GM10248 (cell line): ENCODE measurements at regions of chr3 and their contacts with region 1.

Region 1: GRCh38 chr3:154310840-154311239 is 13.4 kb downstream of the DHX36 start:
- DNase-seq: no peak
- CTCF ChIP-seq: no peak

Region 2: GRCh38 chr3:153855772-153856171 is 455.1 kb before region 1 on chr3:
- CTCF ChIA-PET with region 1: no interaction called
- POLR2A ChIA-PET with region 1: no interaction called
- DNase-seq: no peak
- CTCF ChIP-seq: peak; percentile 6

Region 3: GRCh38 chr3:153928851-153929250 is 382.0 kb before region 1 on chr3:
- CTCF ChIA-PET with region 1: no interaction called
- POLR2A ChIA-PET with region 1: no interaction called
- DNase-seq: no peak
- CTCF ChIP-seq: no peak

Region 4: GRCh38 chr3:154323891-154324738 is 13.3 kb after region 1 on chr3 and contains the start of gene DHX36:
- CTCF ChIA-PET with region 1: interaction called, 12 read pairs
- POLR2A ChIA-PET with region 1: no interaction called
- DNase-seq: peak; percentile 89
- CTCF ChIP-seq: peak; percentile 11

Region 5: GRCh38 chr3:154496978-154497377 is 186.1 kb after region 1 on chr3:
- CTCF ChIA-PET with region 1: no interaction called
- POLR2A ChIA-PET with region 1: no interaction called
- DNase-seq: no peak
- CTCF ChIP-seq: no peak